AG04449 (cell line): ENCODE measurements at regions of chr3 and their contacts with region 1.

Region 1: DNA sequence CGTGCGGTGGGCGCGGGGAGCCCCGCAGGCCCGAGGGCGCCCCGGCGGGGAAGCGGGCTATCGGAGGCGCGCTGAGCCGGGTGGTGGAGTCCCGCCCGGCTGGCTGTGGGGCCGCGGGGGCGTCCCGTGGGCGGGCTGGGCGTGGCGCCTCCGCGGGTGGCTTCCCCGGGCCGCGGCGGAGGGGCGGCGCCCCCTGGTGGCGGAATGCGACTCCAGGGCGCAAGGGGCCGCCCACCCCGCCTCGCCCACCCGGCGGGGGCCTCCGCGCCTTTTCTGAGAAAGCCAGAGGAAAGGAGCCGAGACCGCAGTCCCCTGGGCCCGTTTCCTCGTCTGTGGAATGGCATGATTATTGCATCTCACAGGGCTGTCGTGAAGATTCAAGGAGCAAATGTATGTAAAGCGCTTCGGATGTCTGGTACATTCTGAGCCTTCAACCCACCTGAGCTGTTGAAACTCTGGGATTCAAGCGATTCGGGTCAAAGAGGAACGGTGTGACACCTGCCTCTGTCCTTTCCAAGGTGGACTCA is 31.9 kb upstream of the RAB6B start:
- DNase-seq: no peak
- H3K4me3 ChIP-seq: peak overlapping the region; percentile 52
- CTCF ChIP-seq: peak; percentile 72

Region 2: GRCh38 chr3:133821767-133822638 is 105.6 kb before region 1 on chr3:
- CTCF ChIA-PET with region 1: interaction called, 76 read pairs
- POLR2A ChIA-PET with region 1: no interaction called
- DNase-seq: no peak
- H3K4me3 ChIP-seq: no peak overlapping the region
- CTCF ChIP-seq: no peak

Region 3: DNA sequence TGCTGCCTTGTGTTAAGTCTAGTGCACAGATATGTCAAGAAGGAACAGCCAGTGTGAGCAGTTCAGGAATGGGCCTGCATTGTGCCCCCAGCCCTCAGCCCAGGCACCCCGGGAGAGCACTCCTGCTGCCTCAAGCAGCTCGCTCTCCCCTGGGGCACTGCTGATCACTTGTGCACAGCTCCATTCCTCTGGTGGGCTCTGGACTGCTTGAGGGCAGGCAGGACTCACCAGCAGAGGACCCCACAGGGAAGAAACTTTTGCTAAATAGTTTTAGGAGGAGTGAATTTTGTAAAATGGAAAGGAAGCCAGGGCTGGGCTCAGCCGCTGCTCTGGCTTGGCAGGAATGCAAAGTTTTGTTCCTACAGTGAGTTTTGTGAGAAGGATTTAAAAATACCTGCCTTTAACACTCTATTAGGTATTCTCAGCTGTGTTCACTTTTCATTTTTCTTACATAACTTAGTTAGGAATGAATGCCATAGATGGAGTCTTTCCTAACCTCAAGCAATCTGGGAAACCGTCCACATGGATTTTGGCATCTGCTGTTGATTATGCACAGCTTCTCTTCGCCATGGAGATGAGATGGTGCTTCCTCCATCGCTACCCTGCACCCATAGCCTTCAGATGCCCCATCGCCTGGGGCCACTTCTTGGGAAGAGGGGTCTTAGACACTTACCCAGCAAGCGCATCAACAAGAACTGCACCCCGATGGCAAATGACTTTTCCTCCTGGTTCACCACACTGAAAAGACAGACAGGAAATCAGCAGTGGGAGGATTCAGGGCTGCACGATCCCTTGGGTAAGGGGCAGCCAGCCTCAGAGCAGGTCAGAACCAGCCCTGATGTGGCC is 10.4 kb after region 1 on chr3:
- CTCF ChIA-PET with region 1: interaction called, 16 read pairs
- POLR2A ChIA-PET with region 1: no interaction called
- DNase-seq: peak; percentile 38
- H3K4me3 ChIP-seq: no peak overlapping the region
- CTCF ChIP-seq: no peak

Region 4: GRCh38 chr3:134008618-134009156 is 81.1 kb after region 1 on chr3:
- CTCF ChIA-PET with region 1: no interaction called
- POLR2A ChIA-PET with region 1: no interaction called
- DNase-seq: peak; percentile 84
- H3K4me3 ChIP-seq: no peak overlapping the region
- CTCF ChIP-seq: no peak

Region 5: GRCh38 chr3:134059671-134060560 is 132.3 kb after region 1 on chr3:
- CTCF ChIA-PET with region 1: interaction called, 13 read pairs
- POLR2A ChIA-PET with region 1: no interaction called
- DNase-seq: no peak
- H3K4me3 ChIP-seq: no peak overlapping the region
- CTCF ChIP-seq: no peak

Region 6: GRCh38 chr3:134299185-134299887 is 371.7 kb after region 1 on chr3:
- CTCF ChIA-PET with region 1: interaction called, 21 read pairs
- POLR2A ChIA-PET with region 1: no interaction called
- DNase-seq: no peak
- H3K4me3 ChIP-seq: no peak overlapping the region
- CTCF ChIP-seq: peak; percentile 47